Aorta (tissue), 5 donors: ENCODE measurements at regions of chr21 and their contacts with region 1.

Region 1: GRCh38 chr21:41768437-41769061 is 1.7 kb upstream of the RIPK4 start:
- DNase-seq: peak in 1 of 2 donors; percentile 75
- ATAC-seq: no peak
- H3K4me3 ChIP-seq: peak overlapping the region; percentile 12 to 57
- H3K27ac ChIP-seq: peak overlapping the region in 1 of 2 donors; percentile 60
- H3K4me1 ChIP-seq: no peaks in the 10 kb centered on the region
- H3K27me3 ChIP-seq: no peaks in the 10 kb centered on the region

Region 2: GRCh38 chr21:41641821-41642701 is 126.5 kb before region 1 on chr21:
- intact Hi-C with region 1: loop called in 1 of 2 experiments (anchors 10 kb)
- DNase-seq: peak; percentile 81 to 89
- ATAC-seq: peak; percentile 85
- H3K4me3 ChIP-seq: no peak overlapping the region
- H3K27ac ChIP-seq: peak overlapping the region; percentile 61 to 93
- H3K4me1 ChIP-seq: peaks cover 7 to 8% of the 10 kb centered on the region in 2 donors
- H3K27me3 ChIP-seq: no peaks in the 10 kb centered on the region

Region 3: DNA sequence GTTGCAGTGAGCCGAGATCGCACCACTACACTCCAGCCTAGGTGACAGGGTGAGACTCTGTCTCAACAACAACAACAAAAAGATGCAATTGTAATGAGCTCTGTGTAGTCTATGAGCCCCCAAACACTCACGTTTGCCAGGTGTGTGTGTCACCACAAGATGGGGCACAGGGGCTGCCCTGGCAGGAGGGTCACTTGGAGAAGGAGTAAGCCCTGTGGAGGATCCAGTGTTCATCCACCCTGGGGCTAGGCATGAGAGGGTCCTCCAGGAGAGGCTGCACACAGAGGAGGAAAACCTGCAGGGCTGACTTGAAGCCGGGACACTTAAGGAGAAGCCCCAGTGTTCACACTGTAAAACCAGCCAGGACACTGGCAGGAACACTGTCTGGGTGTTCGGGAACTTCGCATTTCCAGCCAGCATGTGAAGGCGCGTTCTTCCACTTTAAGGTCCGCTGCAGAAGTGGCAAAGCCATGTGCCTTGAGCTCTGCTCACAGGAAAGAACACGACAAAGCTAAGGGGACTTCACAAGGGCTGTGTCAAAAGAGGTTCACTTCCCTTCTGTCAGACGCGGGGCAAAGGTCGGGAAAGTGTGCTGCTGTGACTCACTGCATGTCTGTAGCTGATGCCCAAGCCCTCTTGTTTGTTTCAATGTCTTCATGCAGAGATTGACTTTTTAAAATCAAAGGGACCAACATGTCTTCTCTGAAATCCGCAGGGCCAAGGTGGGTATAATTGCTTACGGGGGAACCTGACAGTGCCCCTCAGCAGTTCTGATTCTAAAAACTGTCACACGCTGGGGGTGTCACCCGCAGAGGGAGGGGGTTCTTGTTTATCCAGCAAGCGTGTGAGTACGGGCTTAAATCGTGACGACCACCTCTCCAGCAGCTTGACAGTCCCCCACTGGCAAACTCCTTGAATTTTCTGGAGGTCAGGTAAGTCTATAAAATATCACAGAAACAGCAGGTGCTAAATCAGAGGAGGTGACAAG is 104.5 kb before region 1 on chr21:
- intact Hi-C with region 1: loop called in 1 of 2 experiments (anchors 5 kb)
- DNase-seq: no peak
- ATAC-seq: no peak
- H3K4me3 ChIP-seq: no peak overlapping the region
- H3K27ac ChIP-seq: no peak overlapping the region
- H3K4me1 ChIP-seq: peaks cover 0 to 2% of the 10 kb centered on the region in 2 donors
- H3K27me3 ChIP-seq: no peaks in the 10 kb centered on the region